Activated naive CD4-positive, alpha-beta T cell treated with anti-CD3 and anti-CD28 coated beads for 36 hours (primary cell): ENCODE measurements at regions of chr10 and their contacts with region 1.

Region 1: GRCh38 chr10:110871298-110872084 is at the start of gene PDCD4:
- DNase-seq: peak; percentile 96
- H3K4me3 Mint-ChIP-seq: peak within 1 kb of the TSS; percentile 93
- H3K27ac Mint-ChIP-seq: peak within 1 kb of the TSS; percentile 98
- H3K4me1 Mint-ChIP-seq: peaks cover 61% of the 10 kb centered on the region
- H3K27me3 Mint-ChIP-seq: no peaks in the 10 kb centered on the region
- total RNA-seq, gene PDCD4: 143 to 146 TPM

Region 2: DNA sequence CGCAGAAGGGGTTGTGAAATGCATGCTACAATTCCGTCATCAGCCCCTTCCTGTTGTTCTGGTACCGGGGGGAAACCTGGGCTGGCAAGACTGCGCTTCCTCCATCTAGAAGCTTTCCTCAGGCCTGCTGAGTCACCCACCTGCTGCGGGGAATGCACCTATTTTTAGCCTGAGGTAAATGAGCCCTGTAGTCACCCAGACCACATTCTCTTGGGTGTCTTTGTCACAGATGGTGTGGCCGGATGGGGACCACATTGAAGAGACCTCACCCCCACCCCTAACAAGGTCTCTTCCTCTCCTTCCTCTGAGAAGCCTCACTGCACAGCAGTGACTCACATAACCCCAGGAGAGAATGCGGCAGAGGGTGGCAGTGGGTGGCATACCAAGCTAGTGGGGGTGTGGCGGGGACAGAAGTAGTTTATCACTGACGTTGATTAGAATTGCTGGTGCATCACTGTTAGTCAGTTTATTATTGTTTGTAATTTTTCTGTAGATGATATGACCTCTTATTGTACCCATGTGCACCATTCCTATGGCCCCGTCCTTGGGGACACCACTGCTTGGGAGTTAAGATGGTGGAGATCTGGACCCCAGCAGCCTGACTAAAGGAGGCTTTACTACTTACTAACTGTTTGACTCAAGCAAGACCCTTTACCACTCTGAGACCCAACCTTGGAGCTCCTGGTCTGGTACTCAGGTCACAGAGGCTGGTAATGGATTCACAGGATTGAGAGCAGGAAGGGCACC is 456.8 kb before region 1 on chr10:
- CTCF ChIA-PET with region 1: no interaction called
- intact Hi-C with region 1: loop called (anchors 5 kb)
- DNase-seq: peak; percentile 98
- H3K4me3 Mint-ChIP-seq: peak overlapping the region; percentile 41
- H3K27ac Mint-ChIP-seq: peak overlapping the region; percentile 84
- H3K4me1 Mint-ChIP-seq: peaks cover 73% of the 10 kb centered on the region
- H3K27me3 Mint-ChIP-seq: no peaks in the 10 kb centered on the region

Region 3: DNA sequence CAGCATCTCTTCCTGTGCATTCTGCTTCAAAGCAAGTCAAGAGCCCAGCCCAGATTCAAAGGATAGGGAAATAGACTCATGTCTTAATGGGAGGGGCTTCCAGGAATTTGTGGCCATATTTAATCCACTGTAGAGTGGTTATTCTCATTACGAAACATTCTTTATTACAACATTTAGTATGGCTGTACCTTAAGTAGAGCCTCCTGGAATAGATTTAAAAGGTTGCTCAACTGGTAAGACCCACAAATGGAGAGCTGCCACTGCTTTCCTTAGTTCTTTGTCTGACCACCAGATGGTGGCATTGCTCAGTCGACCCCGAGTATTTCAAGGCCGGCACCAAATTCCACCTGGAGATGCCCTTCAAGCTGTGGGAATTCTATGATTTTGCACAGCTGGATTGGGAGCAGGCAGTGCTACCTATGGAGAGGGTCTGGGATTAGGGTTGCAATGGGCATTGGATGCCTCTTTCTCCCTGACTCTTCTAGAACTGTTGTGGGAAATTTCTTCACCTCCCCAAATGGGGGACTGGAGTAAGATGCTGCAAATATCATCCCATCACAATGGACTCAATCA is 125.2 kb before region 1 on chr10:
- CTCF ChIA-PET with region 1: interaction called, 3 read pairs
- intact Hi-C with region 1: loop called (anchors 1 kb)
- DNase-seq: peak; percentile 64
- H3K4me3 Mint-ChIP-seq: no peak overlapping the region
- H3K27ac Mint-ChIP-seq: no peak overlapping the region
- H3K4me1 Mint-ChIP-seq: peaks cover 72% of the 10 kb centered on the region
- H3K27me3 Mint-ChIP-seq: no peaks in the 10 kb centered on the region

Region 4: GRCh38 chr10:110857265-110858158 is 14.0 kb before region 1 on chr10:
- CTCF ChIA-PET with region 1: interaction called, 7 read pairs
- intact Hi-C with region 1: loop called (anchors 1 kb)
- DNase-seq: peak; percentile 62
- H3K4me3 Mint-ChIP-seq: peak overlapping the region; percentile 46
- H3K27ac Mint-ChIP-seq: peak overlapping the region; percentile 76
- H3K4me1 Mint-ChIP-seq: peaks cover 82% of the 10 kb centered on the region
- H3K27me3 Mint-ChIP-seq: no peaks in the 10 kb centered on the region

Region 5: DNA sequence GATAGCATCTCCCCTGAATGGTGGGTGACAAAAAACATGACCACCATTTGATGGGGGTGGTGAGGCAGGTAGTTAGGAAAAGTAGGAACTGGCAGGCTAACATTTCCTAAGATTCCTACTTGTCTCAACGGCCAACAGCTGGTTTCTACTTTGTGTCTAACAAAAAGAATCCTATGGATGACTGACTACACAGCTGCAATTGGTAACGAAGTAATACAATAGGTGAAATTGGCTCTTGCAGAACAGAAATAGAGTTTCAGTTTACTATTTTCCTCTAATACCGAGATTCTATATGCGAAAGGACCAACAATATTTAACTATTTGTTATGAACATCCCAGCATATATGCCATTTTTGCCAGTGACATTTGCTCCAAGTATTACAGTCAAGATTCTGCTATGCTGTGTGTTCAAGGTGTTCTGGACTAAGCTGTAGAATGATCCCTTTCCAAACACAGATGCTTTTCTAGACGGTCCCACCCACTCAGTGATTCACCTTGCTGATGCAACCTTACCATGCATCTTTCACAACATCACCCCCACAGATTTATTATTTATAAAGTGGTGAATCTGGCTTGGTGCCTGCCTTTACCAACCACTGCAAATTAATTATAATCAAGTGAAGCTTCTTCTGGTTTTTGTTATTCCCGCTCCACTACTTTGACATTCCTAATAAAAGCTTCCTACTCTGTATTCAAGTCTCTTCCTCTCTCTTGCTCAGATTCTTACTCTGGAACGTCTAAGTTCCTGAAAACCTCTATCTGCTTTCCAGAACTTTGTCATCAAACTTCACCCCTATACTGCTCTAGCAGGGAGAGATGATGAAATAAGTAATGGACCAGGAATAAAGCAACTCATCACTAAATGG is 30.7 kb after region 1 on chr10:
- CTCF ChIA-PET with region 1: no interaction called
- intact Hi-C with region 1: loop called (anchors 1 kb)
- DNase-seq: peak; percentile 76
- H3K4me3 Mint-ChIP-seq: peak overlapping the region; percentile 17
- H3K27ac Mint-ChIP-seq: peak overlapping the region; percentile 74
- H3K4me1 Mint-ChIP-seq: peaks cover 44% of the 10 kb centered on the region
- H3K27me3 Mint-ChIP-seq: no peaks in the 10 kb centered on the region

Region 6: DNA sequence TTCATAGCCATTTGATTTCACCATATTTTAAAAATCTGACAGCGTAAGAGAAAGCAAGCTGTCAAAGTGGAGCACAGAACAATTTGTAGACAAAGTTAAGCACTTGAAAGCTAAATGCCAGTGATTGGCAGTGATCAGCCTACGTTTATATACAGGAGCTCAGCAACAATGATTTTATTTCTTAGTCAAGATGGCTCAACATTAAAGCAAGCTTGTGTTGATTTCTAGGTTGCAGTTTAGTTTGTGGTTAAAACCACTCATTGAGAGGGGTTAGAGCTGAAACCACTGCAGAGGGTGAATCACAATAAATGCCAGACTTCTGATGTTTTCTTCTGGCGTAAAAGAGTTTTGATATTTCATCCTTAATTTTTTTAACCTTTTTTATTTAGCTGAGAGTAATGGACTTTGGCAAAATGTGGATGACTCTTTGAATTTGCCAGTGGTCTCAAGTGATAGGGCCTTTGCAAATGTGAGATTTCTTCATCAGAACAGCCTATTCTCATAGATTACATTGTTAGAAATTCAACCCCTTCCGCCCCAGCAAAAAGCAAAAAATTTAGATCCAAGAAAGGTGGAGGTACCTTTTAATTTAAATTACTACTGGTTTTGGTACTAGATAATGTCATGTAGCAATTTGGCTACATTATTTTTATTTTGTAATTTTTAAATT is 121.7 kb after region 1 on chr10:
- CTCF ChIA-PET with region 1: no interaction called
- intact Hi-C with region 1: no loop called
- DNase-seq: peak; percentile 21
- H3K4me3 Mint-ChIP-seq: no peak overlapping the region
- H3K27ac Mint-ChIP-seq: no peak overlapping the region
- H3K4me1 Mint-ChIP-seq: peaks cover 23% of the 10 kb centered on the region
- H3K27me3 Mint-ChIP-seq: no peaks in the 10 kb centered on the region